K562 (cell line): ENCODE measurements at regions of chr22 and their contacts with region 1.

Region 1: GRCh38 chr22:16803255-16803917 is 21.8 kb downstream of the XKR3 start:
- DNase-seq: no peak
- ATAC-seq: no peak
- H3K4me3 ChIP-seq: no peak overlapping the region
- H3K27ac ChIP-seq: no peak overlapping the region; the same call in 2 of the 3 replicates
- H3K4me1 ChIP-seq: no peaks in the 10 kb centered on the region
- H3K27me3 ChIP-seq: no peaks in the 10 kb centered on the region
- CTCF ChIP-seq: no peak
- EP300 ChIP-seq: no peak
- POLR2A ChIP-seq: no peak
- RAD21 ChIP-seq: no peak

Region 2: DNA sequence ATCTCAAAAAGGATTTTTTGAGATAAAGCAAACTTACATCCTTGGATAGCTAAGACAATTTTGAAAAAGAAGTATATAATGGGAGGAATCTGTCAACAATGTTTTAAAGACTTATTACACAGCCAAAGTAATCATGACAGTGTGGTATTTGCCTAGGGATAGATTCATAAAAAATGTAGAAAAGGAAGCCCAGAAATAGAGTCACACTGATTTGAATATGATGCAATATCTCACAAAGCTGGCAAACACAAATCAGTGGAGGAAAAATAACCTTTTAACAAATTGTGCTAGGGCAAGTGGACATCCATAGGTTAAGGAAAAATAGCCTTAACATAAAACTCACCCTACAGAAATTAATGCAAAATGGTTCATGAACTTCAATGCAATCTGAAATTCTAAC is 15.9 kb after region 1 on chr22:
- CTCF ChIA-PET with region 1: no interaction called
- POLR2A ChIA-PET with region 1: interaction called, 14 read pairs
- in situ Hi-C with region 1: no loop called
- intact Hi-C with region 1: no loop called
- DNase-seq: no peak
- ATAC-seq: no peak
- H3K4me3 ChIP-seq: no peak overlapping the region
- H3K27ac ChIP-seq: no peak overlapping the region
- H3K4me1 ChIP-seq: no peaks in the 10 kb centered on the region
- H3K27me3 ChIP-seq: no peaks in the 10 kb centered on the region
- CTCF ChIP-seq: no peak
- EP300 ChIP-seq: no peak
- POLR2A ChIP-seq: no peak
- RAD21 ChIP-seq: no peak

Region 3: GRCh38 chr22:16970446-16970845 is 167.1 kb after region 1 on chr22:
- CTCF ChIA-PET with region 1: no interaction called
- POLR2A ChIA-PET with region 1: no interaction called
- in situ Hi-C with region 1: no loop called
- intact Hi-C with region 1: no loop called
- DNase-seq: no peak
- ATAC-seq: no peak
- H3K4me3 ChIP-seq: no peak overlapping the region
- H3K27ac ChIP-seq: no peak overlapping the region
- H3K4me1 ChIP-seq: no peaks in the 10 kb centered on the region
- H3K27me3 ChIP-seq: no peaks in the 10 kb centered on the region; a peak in 2 of 5 replicates
- CTCF ChIP-seq: no peak
- EP300 ChIP-seq: no peak
- POLR2A ChIP-seq: no peak
- RAD21 ChIP-seq: no peak